Endothelial cell of umbilical vein (primary cell): ENCODE measurements at regions of chr2 and their contacts with region 1.

Region 1: DNA sequence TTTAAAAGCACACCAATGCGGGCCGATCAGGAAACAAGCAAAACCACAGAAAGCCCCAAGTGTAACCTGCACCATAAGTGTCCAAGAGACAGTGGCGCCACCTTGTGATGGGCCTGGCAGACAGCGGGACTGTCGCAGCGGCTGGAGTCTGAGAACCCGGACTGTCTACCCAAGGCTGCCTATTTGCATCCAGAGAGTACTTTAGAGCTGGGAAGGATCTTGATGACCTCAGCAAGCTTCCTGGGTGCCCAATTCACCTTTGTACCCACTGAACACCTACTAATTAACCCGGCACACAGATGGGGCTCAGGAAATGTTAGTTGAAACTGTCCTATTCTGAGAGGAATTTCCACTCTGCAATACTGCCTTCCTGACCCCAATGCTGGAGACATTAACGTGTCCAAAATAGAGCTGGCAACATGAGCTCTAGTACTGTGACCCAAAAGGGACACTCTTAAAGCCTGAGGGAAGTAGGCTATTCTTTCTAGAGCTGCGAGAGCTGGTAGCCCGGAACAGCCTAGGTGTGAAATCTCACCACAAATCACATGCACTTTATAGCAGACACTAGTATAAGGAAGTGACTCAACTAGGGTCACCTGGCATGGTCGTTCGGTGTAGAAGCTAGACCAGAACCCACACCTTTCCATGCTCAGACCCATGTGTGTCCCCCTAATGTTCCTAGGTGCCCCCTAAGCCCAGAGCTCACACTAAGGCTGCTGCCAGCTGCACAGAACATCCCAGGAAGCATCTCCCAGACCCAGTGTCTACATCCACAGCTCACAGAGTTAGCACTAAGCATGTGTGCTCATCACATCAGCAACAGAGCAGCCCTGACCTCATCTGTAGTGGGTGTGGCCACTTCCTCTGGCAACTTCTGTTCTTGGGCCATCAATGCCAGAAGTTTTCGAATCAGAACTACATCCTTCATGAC is 25.4 kb downstream of the POLR1A start:
- DNase-seq: peak; percentile 58
- H3K4me3 ChIP-seq: no peak overlapping the region
- H3K27ac ChIP-seq: peak overlapping the region; percentile 9
- H3K4me1 ChIP-seq: peaks cover 3% of the 10 kb centered on the region
- H3K27me3 ChIP-seq: no peaks in the 10 kb centered on the region
- CTCF ChIP-seq: peak; percentile 84 to 91
- POLR2A ChIP-seq: no peak

Region 2: DNA sequence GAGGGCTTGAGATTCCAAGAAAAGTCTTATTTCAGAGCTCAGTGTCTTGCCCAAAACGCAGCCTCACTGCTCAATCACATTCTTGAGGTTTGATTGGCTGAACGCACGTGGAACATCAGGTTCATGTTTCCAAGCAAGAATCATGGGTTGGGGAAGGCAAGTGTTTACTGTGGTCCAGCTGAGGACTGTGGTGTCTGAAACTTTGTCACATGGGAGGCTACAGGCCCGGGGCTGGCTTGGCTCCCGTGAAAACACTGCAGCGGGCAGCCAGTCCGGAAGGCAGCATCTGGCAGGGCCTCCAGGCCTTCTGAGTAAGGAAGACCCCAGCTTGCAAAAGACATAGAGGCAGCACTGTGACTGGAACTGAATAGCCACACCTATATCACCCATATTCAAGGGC is 59.3 kb before region 1 on chr2:
- CTCF ChIA-PET with region 1: interaction called, 14 read pairs
- POLR2A ChIA-PET with region 1: no interaction called
- dilution Hi-C with region 1: no loop called
- intact Hi-C with region 1: no loop called
- DNase-seq: peak; percentile 87
- H3K4me3 ChIP-seq: no peak overlapping the region
- H3K27ac ChIP-seq: no peak overlapping the region
- H3K4me1 ChIP-seq: peaks cover 15% of the 10 kb centered on the region
- H3K27me3 ChIP-seq: no peaks in the 10 kb centered on the region
- CTCF ChIP-seq: no peak
- POLR2A ChIP-seq: no peak

Region 3: GRCh38 chr2:86028766-86029381 is 51.4 kb before region 1 on chr2:
- CTCF ChIA-PET with region 1: interaction called, 14 read pairs
- POLR2A ChIA-PET with region 1: no interaction called
- dilution Hi-C with region 1: no loop called
- intact Hi-C with region 1: no loop called
- DNase-seq: peak; percentile 89
- H3K4me3 ChIP-seq: no peak overlapping the region
- H3K27ac ChIP-seq: no peak overlapping the region
- H3K4me1 ChIP-seq: peaks cover 17% of the 10 kb centered on the region
- H3K27me3 ChIP-seq: no peaks in the 10 kb centered on the region
- CTCF ChIP-seq: no peak
- POLR2A ChIP-seq: no peak